ENCODE measurements at regions of chr1 and their contacts with region 1.

Region 1: DNA sequence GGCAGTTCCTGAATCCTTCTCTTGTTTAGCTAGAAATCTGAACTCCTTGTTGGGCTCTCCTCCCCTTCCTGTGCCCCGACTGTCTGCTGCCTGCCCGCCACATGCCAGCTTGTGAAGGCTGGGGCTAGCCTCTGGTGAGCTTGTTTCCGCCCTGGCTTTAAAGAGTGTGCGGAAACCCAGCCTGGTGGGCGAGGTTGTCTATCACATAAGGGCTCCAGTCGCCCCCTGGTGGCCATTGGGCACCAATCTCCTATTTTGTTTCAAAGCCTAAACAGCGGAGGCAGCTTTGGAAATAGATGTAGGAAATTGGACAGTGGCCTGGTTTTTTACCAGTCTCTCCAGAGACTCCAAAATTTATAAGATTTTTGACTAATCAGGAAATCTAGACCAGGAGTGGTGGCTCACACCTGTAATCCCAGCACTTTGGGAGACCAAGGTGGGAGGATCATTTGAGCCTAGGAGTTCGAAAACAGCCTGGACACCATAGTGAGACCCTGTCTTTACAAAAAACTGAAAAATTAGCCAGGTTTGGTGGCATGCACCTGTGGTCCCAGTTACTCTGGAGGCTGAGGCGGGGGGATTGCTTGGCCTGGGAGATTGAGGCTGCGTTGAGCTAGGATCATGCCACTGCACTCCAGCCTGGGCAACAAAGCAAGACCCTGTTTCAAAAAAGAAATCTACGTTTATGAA is 9.8 kb downstream of the ATP8B2 start:
- DNase-seq: peak; percentile 88
- ATAC-seq: peak; percentile 87
- H3K4me3 ChIP-seq: peak overlapping the region in 2 of 3 experiments; percentile 17 to 25; a peak in 2 of 6 replicates
- H3K27ac ChIP-seq: peak overlapping the region; percentile 81
- H3K4me1 ChIP-seq: peaks cover 35% of the 10 kb centered on the region
- H3K27me3 ChIP-seq: no peaks in the 10 kb centered on the region
- CTCF ChIP-seq: peak; percentile 90
- EP300 ChIP-seq: no peak
- POLR2A ChIP-seq: no peak
- RAD21 ChIP-seq: peak; percentile 85

Region 2: GRCh38 chr1:153796791-153797659 is 538.1 kb before region 1 on chr1:
- CTCF ChIA-PET with region 1: no interaction called
- POLR2A ChIA-PET with region 1: no interaction called
- in situ Hi-C with region 1: no loop called
- intact Hi-C with region 1: no loop called
- DNase-seq: peak; percentile 65
- ATAC-seq: peak; percentile 66
- H3K4me3 ChIP-seq: no peak overlapping the region
- H3K27ac ChIP-seq: no peak overlapping the region
- H3K4me1 ChIP-seq: peaks cover 39% of the 10 kb centered on the region
- H3K27me3 ChIP-seq: peaks cover 7 to 45% of the 10 kb centered on the region in 2 experiments; a peak in 4 of 5 replicates
- CTCF ChIP-seq: peak; percentile 84
- EP300 ChIP-seq: no peak
- POLR2A ChIP-seq: no peak
- RAD21 ChIP-seq: peak; percentile 67

Region 3: DNA sequence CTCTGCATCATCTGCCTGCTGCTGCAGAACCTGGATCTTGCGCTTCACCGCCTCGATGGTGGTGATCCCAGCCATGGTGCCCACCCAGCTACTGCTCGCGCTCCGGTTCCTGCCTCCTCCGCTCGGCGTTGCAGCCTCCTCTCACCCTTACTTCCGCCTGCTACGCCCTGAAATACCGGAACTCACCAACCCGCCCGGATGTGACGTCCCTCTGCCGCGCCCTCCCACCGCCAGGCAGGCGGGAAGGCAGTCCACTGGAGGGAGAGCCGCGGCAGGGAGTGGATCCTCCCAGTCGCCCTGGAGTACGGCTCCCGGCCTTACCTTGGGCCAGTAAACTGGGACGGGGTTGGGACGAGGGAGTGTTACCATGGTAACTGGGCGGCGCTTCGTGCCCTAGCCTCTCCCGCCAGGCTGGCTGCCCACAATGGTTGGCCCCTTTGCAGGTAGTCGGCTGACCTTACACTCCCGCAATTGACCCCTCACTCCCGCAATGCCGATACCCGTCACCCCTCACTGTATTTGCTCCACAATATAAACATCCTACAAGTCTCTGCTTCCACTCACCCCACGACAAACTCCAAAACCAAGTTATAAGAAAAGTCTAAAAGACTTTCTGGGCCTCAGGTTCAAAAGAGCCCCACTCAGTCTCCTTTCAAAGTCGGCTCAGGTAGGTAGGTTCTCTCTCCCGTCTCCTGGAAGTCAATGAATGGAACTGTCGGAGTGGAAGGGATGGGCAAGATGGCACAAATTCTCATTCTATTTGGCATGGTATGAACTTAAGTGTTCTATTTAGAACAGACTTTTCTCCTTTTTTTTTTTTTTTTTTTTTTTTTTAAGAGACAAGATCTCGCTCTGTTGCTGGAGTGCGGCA is 151.9 kb before region 1 on chr1:
- CTCF ChIA-PET with region 1: interaction called, 3 read pairs
- POLR2A ChIA-PET with region 1: interaction called, 3 read pairs
- in situ Hi-C with region 1: loop called (anchors 5 kb)
- intact Hi-C with region 1: no loop called
- DNase-seq: peak; percentile 97
- ATAC-seq: peak; percentile 97
- H3K4me3 ChIP-seq: peak overlapping the region; percentile 88 to 98 (median 90)
- H3K27ac ChIP-seq: peak overlapping the region; percentile 69
- H3K4me1 ChIP-seq: peaks cover 55% of the 10 kb centered on the region
- H3K27me3 ChIP-seq: no peaks in the 10 kb centered on the region; a peak in 1 of 5 replicates
- CTCF ChIP-seq: peak; percentile 36
- EP300 ChIP-seq: peak in 1 of 2 experiments; percentile 15; a peak in 1 of 4 replicates
- POLR2A ChIP-seq: peak; percentile 81 to 87
- RAD21 ChIP-seq: no peak

Region 4: GRCh38 chr1:154220071-154220969 is 114.8 kb before region 1 on chr1 and contains the start of gene UBAP2L:
- CTCF ChIA-PET with region 1: no interaction called
- POLR2A ChIA-PET with region 1: interaction called, 14 read pairs
- in situ Hi-C with region 1: no loop called
- intact Hi-C with region 1: no loop called
- DNase-seq: peak; percentile 98
- ATAC-seq: peak; percentile 95
- H3K4me3 ChIP-seq: peak within 1 kb of the TSS; percentile 90 to 99 (median 96)
- H3K27ac ChIP-seq: peak within 1 kb of the TSS; percentile 100
- H3K4me1 ChIP-seq: peaks cover 79% of the 10 kb centered on the region
- H3K27me3 ChIP-seq: no peaks in the 10 kb centered on the region; a peak in 1 of 5 replicates
- CTCF ChIP-seq: 0 out of 2 replicates have a peak, but pooled peaks have one; percentile 4
- EP300 ChIP-seq: peak in 1 of 2 experiments; percentile 39; a peak in 1 of 4 replicates
- POLR2A ChIP-seq: peak; percentile 73 to 87
- RAD21 ChIP-seq: no peak; the same call in 1 of the 2 replicates
- total RNA-seq, gene UBAP2L: 74.2 and 75.9 TPM in 2 replicates

Region 5: GRCh38 chr1:154324669-154325582 is 10.2 kb before region 1 on chr1 and contains the start of gene ATP8B2:
- CTCF ChIA-PET with region 1: interaction called, 100 read pairs
- POLR2A ChIA-PET with region 1: interaction called, 126 read pairs
- in situ Hi-C with region 1: no loop called
- intact Hi-C with region 1: loop called (anchors 1 kb)
- DNase-seq: peak; percentile 72
- ATAC-seq: peak; percentile 81
- H3K4me3 ChIP-seq: peak within 1 kb of the TSS; percentile 77 to 88 (median 79)
- H3K27ac ChIP-seq: peak within 1 kb of the TSS; percentile 54
- H3K4me1 ChIP-seq: peaks cover 39% of the 10 kb centered on the region
- H3K27me3 ChIP-seq: peaks cover 7 to 9% of the 10 kb centered on the region in 2 experiments; a peak in 3 of 5 replicates
- CTCF ChIP-seq: peak; percentile 95
- EP300 ChIP-seq: no peak
- POLR2A ChIP-seq: peak in 1 of 2 experiments; percentile 30; a peak in 1 of 4 replicates
- RAD21 ChIP-seq: peak; percentile 68; the same call in 1 of the 2 replicates
- total RNA-seq, gene ATP8B2: 31.3 and 39.3 TPM in 2 replicates

Region 6: GRCh38 chr1:154352581-154353459 is 17.6 kb after region 1 on chr1:
- CTCF ChIA-PET with region 1: no interaction called
- POLR2A ChIA-PET with region 1: interaction called, 21 read pairs
- in situ Hi-C with region 1: no loop called
- intact Hi-C with region 1: no loop called
- DNase-seq: no peak
- ATAC-seq: peak; percentile 70
- H3K4me3 ChIP-seq: peak overlapping the region; percentile 52 to 75 (median 55)
- H3K27ac ChIP-seq: no peak overlapping the region
- H3K4me1 ChIP-seq: peaks cover 52% of the 10 kb centered on the region
- H3K27me3 ChIP-seq: peaks cover 0 to 4% of the 10 kb centered on the region in 2 experiments; a peak in 1 of 5 replicates
- CTCF ChIP-seq: peak; percentile 33
- EP300 ChIP-seq: no peak
- POLR2A ChIP-seq: no peak
- RAD21 ChIP-seq: no peak

Region 7: GRCh38 chr1:154419620-154420571 is 84.7 kb after region 1 on chr1:
- CTCF ChIA-PET with region 1: no interaction called
- POLR2A ChIA-PET with region 1: interaction called, 17 read pairs
- in situ Hi-C with region 1: no loop called
- intact Hi-C with region 1: no loop called
- DNase-seq: peak; percentile 83
- ATAC-seq: peak; percentile 62
- H3K4me3 ChIP-seq: peak overlapping the region; percentile 2 to 68 (median 20); a peak in 5 of 6 replicates
- H3K27ac ChIP-seq: peak overlapping the region; percentile 85
- H3K4me1 ChIP-seq: peaks cover 83% of the 10 kb centered on the region
- H3K27me3 ChIP-seq: no peaks in the 10 kb centered on the region
- CTCF ChIP-seq: 0 out of 2 replicates have a peak, but pooled peaks have one; percentile 4
- EP300 ChIP-seq: peak in 1 of 2 experiments; percentile 81; a peak in 2 of 4 replicates
- POLR2A ChIP-seq: peak in 1 of 2 experiments; percentile 52; a peak in 2 of 4 replicates
- RAD21 ChIP-seq: no peak

Measured in HepG2 (cell line).